ENCODE measurements at regions of chr5 and their contacts with region 1.

Region 1: GRCh38 chr5:170333161-170333910 is 35.8 kb upstream of the LCP2 start:
- DNase-seq: peak in 8 of 9 experiments; percentile 46 to 89 (median 72)
- ATAC-seq: peak; percentile 24
- H3K4me3 ChIP-seq: peak overlapping the region; percentile 17 to 27
- H3K4me3 Mint-ChIP-seq: peak overlapping the region; percentile 75
- H3K27ac ChIP-seq: peak overlapping the region; percentile 18 to 96
- H3K27ac Mint-ChIP-seq: no peak overlapping the region
- H3K4me1 ChIP-seq: peaks cover 95% of the 10 kb centered on the region
- H3K4me1 Mint-ChIP-seq: peaks cover 30% of the 10 kb centered on the region
- H3K27me3 ChIP-seq: no peaks in the 10 kb centered on the region
- H3K27me3 Mint-ChIP-seq: no peaks in the 10 kb centered on the region
- CTCF ChIP-seq: no peak

Region 2: GRCh38 chr5:168486136-168486879 is 1847.0 kb before region 1 on chr5 and contains the start of gene RARS1:
- CTCF ChIA-PET with region 1: no interaction called
- POLR2A ChIA-PET with region 1: interaction called, 3 read pairs
- intact Hi-C with region 1: loop called in 1 of 2 experiments (anchors 5 kb)
- DNase-seq: peak; percentile 73 to 94 (median 88)
- ATAC-seq: peak; percentile 89
- H3K4me3 ChIP-seq: peak within 1 kb of the TSS; percentile 94 to 96
- H3K4me3 Mint-ChIP-seq: peak within 1 kb of the TSS; percentile 100
- H3K27ac ChIP-seq: peak within 1 kb of the TSS; percentile 71 to 79
- H3K27ac Mint-ChIP-seq: peak within 1 kb of the TSS; percentile 96
- H3K4me1 ChIP-seq: peaks cover 15% of the 10 kb centered on the region
- H3K4me1 Mint-ChIP-seq: peaks cover 37% of the 10 kb centered on the region
- H3K27me3 ChIP-seq: no peaks in the 10 kb centered on the region
- H3K27me3 Mint-ChIP-seq: peaks cover 5% of the 10 kb centered on the region
- CTCF ChIP-seq: peak; percentile 96
- total RNA-seq, gene RARS1: 80.2 to 91.9 TPM

Region 3: GRCh38 chr5:169856571-169856970 is 476.8 kb before region 1 on chr5:
- CTCF ChIA-PET with region 1: no interaction called
- POLR2A ChIA-PET with region 1: no interaction called
- intact Hi-C with region 1: no loop called
- DNase-seq: no peak
- ATAC-seq: no peak
- H3K4me3 ChIP-seq: no peak overlapping the region
- H3K4me3 Mint-ChIP-seq: no peak overlapping the region
- H3K27ac ChIP-seq: no peak overlapping the region
- H3K27ac Mint-ChIP-seq: no peak overlapping the region
- H3K4me1 ChIP-seq: no peaks in the 10 kb centered on the region
- H3K4me1 Mint-ChIP-seq: peaks cover 39% of the 10 kb centered on the region
- H3K27me3 ChIP-seq: no peaks in the 10 kb centered on the region
- H3K27me3 Mint-ChIP-seq: no peaks in the 10 kb centered on the region
- CTCF ChIP-seq: no peak

Region 4: GRCh38 chr5:170253844-170254455 is 79.4 kb before region 1 on chr5:
- CTCF ChIA-PET with region 1: interaction called, 20 read pairs
- POLR2A ChIA-PET with region 1: no interaction called
- intact Hi-C with region 1: loop called in 1 of 2 experiments (anchors 1 kb)
- DNase-seq: peak; percentile 44 to 92 (median 73)
- ATAC-seq: peak; percentile 95
- H3K4me3 ChIP-seq: no peak overlapping the region
- H3K4me3 Mint-ChIP-seq: peak overlapping the region; percentile 16
- H3K27ac ChIP-seq: peak overlapping the region; percentile 38 to 61
- H3K27ac Mint-ChIP-seq: peak overlapping the region; percentile 95
- H3K4me1 ChIP-seq: peaks cover 39% of the 10 kb centered on the region
- H3K4me1 Mint-ChIP-seq: peaks cover 77% of the 10 kb centered on the region
- H3K27me3 ChIP-seq: no peaks in the 10 kb centered on the region
- H3K27me3 Mint-ChIP-seq: no peaks in the 10 kb centered on the region
- CTCF ChIP-seq: no peak

Region 5: DNA sequence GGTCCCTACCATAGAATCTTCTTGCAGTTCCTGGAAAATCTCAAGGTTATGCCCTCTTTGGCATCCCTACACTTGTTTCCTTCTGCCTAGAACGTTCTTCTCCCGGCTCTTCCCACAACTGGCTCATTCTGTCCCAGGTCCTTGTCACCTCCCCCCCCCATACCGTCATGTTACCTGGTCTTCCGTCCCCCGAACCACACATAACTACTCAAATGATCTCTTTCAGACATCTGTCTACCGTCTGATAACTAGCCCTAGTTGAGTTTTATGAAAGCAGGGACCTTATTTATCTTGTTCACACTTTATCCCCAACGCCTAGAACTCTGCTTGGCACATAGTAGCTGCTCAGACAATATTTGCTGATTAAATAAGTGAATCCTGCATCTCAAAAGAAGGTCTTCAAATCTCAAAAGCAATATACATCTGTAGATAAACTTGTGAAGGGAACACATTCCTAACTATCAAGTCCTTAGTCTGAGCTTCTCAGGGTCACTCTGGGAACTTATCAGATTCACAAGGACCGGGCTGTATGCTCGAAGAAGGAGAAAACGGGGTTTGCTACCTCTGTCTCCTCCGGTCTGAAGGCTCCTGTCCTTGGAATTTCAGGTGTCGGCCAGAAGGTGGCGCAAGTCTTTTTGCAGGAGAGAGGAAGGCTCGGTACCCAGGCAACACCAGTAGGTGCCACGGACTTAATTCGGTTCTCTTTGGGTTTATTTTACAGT is 65.7 kb before region 1 on chr5:
- CTCF ChIA-PET with region 1: interaction called, 342 read pairs
- POLR2A ChIA-PET with region 1: interaction called, 33 read pairs
- intact Hi-C with region 1: loop called in 1 of 2 experiments (anchors 1 kb)
- DNase-seq: peak; percentile 65 to 93 (median 86)
- ATAC-seq: peak; percentile 52
- H3K4me3 ChIP-seq: peak overlapping the region in 1 of 2 experiments; percentile 9
- H3K4me3 Mint-ChIP-seq: peak overlapping the region; percentile 69
- H3K27ac ChIP-seq: peak overlapping the region; percentile 8 to 77
- H3K27ac Mint-ChIP-seq: peak overlapping the region; percentile 98
- H3K4me1 ChIP-seq: peaks cover 90% of the 10 kb centered on the region
- H3K4me1 Mint-ChIP-seq: peaks cover 96% of the 10 kb centered on the region
- H3K27me3 ChIP-seq: no peaks in the 10 kb centered on the region
- H3K27me3 Mint-ChIP-seq: no peaks in the 10 kb centered on the region
- CTCF ChIP-seq: peak; percentile 87

Region 6: GRCh38 chr5:170293273-170293672 is 40.1 kb before region 1 on chr5:
- CTCF ChIA-PET with region 1: interaction called, 192 read pairs
- POLR2A ChIA-PET with region 1: interaction called, 112 read pairs
- intact Hi-C with region 1: loop called (anchors 2 kb)
- DNase-seq: peak in 6 of 9 experiments; percentile 53 to 86 (median 72)
- ATAC-seq: peak; percentile 29
- H3K4me3 ChIP-seq: peak overlapping the region; percentile 87 to 94
- H3K4me3 Mint-ChIP-seq: peak overlapping the region; percentile 99
- H3K27ac ChIP-seq: peak overlapping the region in 1 of 2 experiments; percentile 86
- H3K27ac Mint-ChIP-seq: peak overlapping the region; percentile 97
- H3K4me1 ChIP-seq: peaks cover 73% of the 10 kb centered on the region
- H3K4me1 Mint-ChIP-seq: peaks cover 82% of the 10 kb centered on the region
- H3K27me3 ChIP-seq: no peaks in the 10 kb centered on the region
- H3K27me3 Mint-ChIP-seq: no peaks in the 10 kb centered on the region
- CTCF ChIP-seq: no peak

Region 7: DNA sequence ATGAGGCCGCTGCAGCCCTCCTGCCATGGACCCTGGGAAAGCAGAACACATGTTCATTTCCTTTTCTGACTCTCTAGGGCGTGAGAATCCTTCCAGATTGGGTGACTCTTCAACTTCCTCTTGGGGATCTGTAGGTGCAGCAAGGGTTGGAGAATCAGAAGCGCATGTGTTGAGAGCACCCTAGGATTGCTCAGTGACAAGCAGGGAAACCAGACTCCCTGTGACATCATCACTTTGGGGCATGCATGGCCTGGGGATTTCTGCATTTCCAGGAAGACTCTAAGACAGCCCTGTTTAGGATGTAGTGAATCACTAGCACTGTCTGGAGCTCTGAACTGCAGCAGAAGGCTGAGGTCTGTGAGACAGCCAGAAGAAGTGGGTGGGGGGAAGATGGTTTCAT is 20.7 kb before region 1 on chr5:
- CTCF ChIA-PET with region 1: interaction called, 9 read pairs
- POLR2A ChIA-PET with region 1: interaction called, 24 read pairs
- intact Hi-C with region 1: loop called (anchors 1 to 2 kb)
- DNase-seq: peak in 5 of 9 experiments; percentile 45 to 87 (median 75)
- ATAC-seq: peak; percentile 90
- H3K4me3 ChIP-seq: no peak overlapping the region
- H3K4me3 Mint-ChIP-seq: peak overlapping the region; percentile 59
- H3K27ac ChIP-seq: peak overlapping the region in 1 of 2 experiments; percentile 40
- H3K27ac Mint-ChIP-seq: peak overlapping the region; percentile 89
- H3K4me1 ChIP-seq: peaks cover 43% of the 10 kb centered on the region
- H3K4me1 Mint-ChIP-seq: peaks cover 73% of the 10 kb centered on the region
- H3K27me3 ChIP-seq: no peaks in the 10 kb centered on the region
- H3K27me3 Mint-ChIP-seq: no peaks in the 10 kb centered on the region
- CTCF ChIP-seq: no peak